ENCODE measurements at regions of chr2 and their contacts with region 1.

Region 1: GRCh38 chr2:135709992-135710391 is 31.7 kb upstream of the UBXN4 start:
- DNase-seq: peak; percentile 49 to 87 (median 70)
- ATAC-seq: peak; percentile 86
- H3K4me3 ChIP-seq: no peak overlapping the region
- H3K4me3 Mint-ChIP-seq: no peak overlapping the region
- H3K27ac ChIP-seq: no peak overlapping the region
- H3K27ac Mint-ChIP-seq: no peak overlapping the region
- H3K4me1 ChIP-seq: no peaks in the 10 kb centered on the region
- H3K4me1 Mint-ChIP-seq: peaks cover 2% of the 10 kb centered on the region
- H3K27me3 ChIP-seq: no peaks in the 10 kb centered on the region
- H3K27me3 Mint-ChIP-seq: no peaks in the 10 kb centered on the region
- CTCF ChIP-seq: peak; percentile 98

Region 2: DNA sequence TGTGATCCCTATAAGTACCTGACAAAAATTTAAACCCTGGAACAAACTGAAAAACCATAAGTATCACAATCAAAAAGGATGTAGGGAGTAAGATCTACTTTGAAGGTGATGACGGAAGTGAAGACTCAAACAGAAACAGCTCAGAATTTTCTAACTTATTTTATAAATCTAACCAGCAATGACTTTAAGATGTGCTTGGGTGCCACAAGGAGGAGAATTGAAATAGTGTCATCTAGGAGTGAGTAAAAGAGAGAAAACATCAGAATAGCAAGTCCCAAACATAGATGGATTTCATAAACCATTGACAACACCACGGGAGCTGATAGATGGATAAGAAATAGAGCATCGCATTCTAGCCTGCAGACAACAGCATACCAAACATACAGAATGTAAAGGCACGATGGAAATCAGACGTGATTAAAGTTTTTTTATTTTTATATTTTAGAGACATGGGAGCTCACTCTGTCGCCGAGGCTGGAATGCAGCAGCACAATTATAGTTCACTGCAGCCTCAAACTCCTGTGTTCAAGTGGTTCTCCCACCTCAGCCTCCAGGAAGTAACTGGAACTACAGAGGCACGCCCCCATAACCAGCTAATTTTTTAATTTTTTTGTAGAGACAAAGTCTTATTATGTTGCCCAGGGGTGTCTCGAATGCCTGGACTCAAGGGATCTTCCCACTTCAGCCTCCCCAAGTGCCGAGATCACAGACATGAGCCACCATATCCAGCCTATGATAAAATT is 699.6 kb before region 1 on chr2:
- CTCF ChIA-PET with region 1: interaction called, 113 read pairs
- POLR2A ChIA-PET with region 1: no interaction called
- intact Hi-C with region 1: no loop called
- DNase-seq: no peak
- ATAC-seq: no peak
- H3K4me3 ChIP-seq: no peak overlapping the region
- H3K4me3 Mint-ChIP-seq: no peak overlapping the region
- H3K27ac ChIP-seq: no peak overlapping the region
- H3K27ac Mint-ChIP-seq: no peak overlapping the region
- H3K4me1 ChIP-seq: no peaks in the 10 kb centered on the region
- H3K4me1 Mint-ChIP-seq: no peaks in the 10 kb centered on the region
- H3K27me3 ChIP-seq: no peaks in the 10 kb centered on the region
- H3K27me3 Mint-ChIP-seq: no peaks in the 10 kb centered on the region
- CTCF ChIP-seq: no peak

Region 3: DNA sequence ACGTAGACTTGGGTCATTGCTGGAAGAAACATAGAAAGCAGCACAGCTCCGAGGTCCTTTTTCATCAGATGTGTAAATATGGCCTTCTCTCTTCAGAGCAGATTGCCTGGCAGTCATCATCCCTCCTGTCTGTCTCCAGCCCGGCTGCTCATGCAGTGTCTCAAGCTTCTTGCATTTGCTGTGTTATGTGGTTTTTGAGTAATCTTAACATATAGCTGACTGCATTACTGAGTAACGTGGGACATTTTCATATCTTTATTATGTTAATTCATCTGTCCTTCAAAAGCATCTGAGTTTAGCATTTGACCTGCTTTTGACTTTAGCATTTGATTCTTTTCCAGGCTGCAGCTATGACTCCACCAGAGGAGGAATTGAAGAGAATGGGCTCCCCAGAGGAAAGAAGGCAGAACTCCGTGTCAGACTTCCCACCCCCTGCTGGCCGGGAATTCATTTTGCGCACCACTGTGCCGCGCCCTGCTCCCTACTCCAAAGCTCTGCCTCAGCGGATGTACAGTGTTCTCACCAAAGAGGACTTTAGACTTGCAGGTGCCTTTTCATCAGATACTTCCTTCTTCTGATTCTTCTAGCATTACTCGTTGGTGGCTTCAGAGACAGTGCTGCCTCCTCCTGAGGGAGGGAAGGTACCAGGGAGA is 541.7 kb before region 1 on chr2:
- CTCF ChIA-PET with region 1: interaction called, 3 read pairs
- POLR2A ChIA-PET with region 1: no interaction called
- intact Hi-C with region 1: loop called in 1 of 2 experiments (anchors 5 kb)
- DNase-seq: no peak
- ATAC-seq: no peak
- H3K4me3 ChIP-seq: no peak overlapping the region
- H3K4me3 Mint-ChIP-seq: no peak overlapping the region
- H3K27ac ChIP-seq: no peak overlapping the region
- H3K27ac Mint-ChIP-seq: peak overlapping the region; percentile 21
- H3K4me1 ChIP-seq: no peaks in the 10 kb centered on the region
- H3K4me1 Mint-ChIP-seq: peaks cover 24% of the 10 kb centered on the region
- H3K27me3 ChIP-seq: no peaks in the 10 kb centered on the region
- H3K27me3 Mint-ChIP-seq: no peaks in the 10 kb centered on the region
- CTCF ChIP-seq: no peak

Region 4: GRCh38 chr2:135531231-135532228 is 178.5 kb before region 1 on chr2 and contains the start of gene R3HDM1:
- CTCF ChIA-PET with region 1: interaction called, 4 read pairs
- POLR2A ChIA-PET with region 1: no interaction called
- intact Hi-C with region 1: loop called in 1 of 2 experiments (anchors 1 kb)
- DNase-seq: peak; percentile 88 to 99 (median 94)
- ATAC-seq: peak; percentile 75
- H3K4me3 ChIP-seq: peak within 1 kb of the TSS; percentile 74 to 84
- H3K4me3 Mint-ChIP-seq: no peak within 1 kb of the TSS
- H3K27ac ChIP-seq: peak within 1 kb of the TSS; percentile 79 to 91
- H3K27ac Mint-ChIP-seq: no peak within 1 kb of the TSS
- H3K4me1 ChIP-seq: peaks cover 15% of the 10 kb centered on the region
- H3K4me1 Mint-ChIP-seq: peaks cover 29% of the 10 kb centered on the region
- H3K27me3 ChIP-seq: no peaks in the 10 kb centered on the region
- H3K27me3 Mint-ChIP-seq: no peaks in the 10 kb centered on the region
- CTCF ChIP-seq: no peak
- total RNA-seq, gene R3HDM1: 35.3 to 48.2 TPM

Region 5: GRCh38 chr2:135600915-135601314 is 109.1 kb before region 1 on chr2:
- CTCF ChIA-PET with region 1: interaction called, 12 read pairs
- POLR2A ChIA-PET with region 1: no interaction called
- intact Hi-C with region 1: loop called in 1 of 2 experiments (anchors 2 kb)
- DNase-seq: peak in 2 of 9 experiments; percentile 18 to 37
- ATAC-seq: no peak
- H3K4me3 ChIP-seq: no peak overlapping the region
- H3K4me3 Mint-ChIP-seq: no peak overlapping the region
- H3K27ac ChIP-seq: no peak overlapping the region
- H3K27ac Mint-ChIP-seq: no peak overlapping the region
- H3K4me1 ChIP-seq: no peaks in the 10 kb centered on the region
- H3K4me1 Mint-ChIP-seq: peaks cover 11% of the 10 kb centered on the region
- H3K27me3 ChIP-seq: no peaks in the 10 kb centered on the region
- H3K27me3 Mint-ChIP-seq: no peaks in the 10 kb centered on the region
- CTCF ChIP-seq: peak; percentile 46

Region 6: GRCh38 chr2:135630488-135630887 is 79.5 kb before region 1 on chr2:
- CTCF ChIA-PET with region 1: no interaction called
- POLR2A ChIA-PET with region 1: no interaction called
- intact Hi-C with region 1: no loop called
- DNase-seq: no peak
- ATAC-seq: no peak
- H3K4me3 ChIP-seq: no peak overlapping the region
- H3K4me3 Mint-ChIP-seq: no peak overlapping the region
- H3K27ac ChIP-seq: no peak overlapping the region
- H3K27ac Mint-ChIP-seq: no peak overlapping the region
- H3K4me1 ChIP-seq: no peaks in the 10 kb centered on the region
- H3K4me1 Mint-ChIP-seq: no peaks in the 10 kb centered on the region
- H3K27me3 ChIP-seq: no peaks in the 10 kb centered on the region
- H3K27me3 Mint-ChIP-seq: no peaks in the 10 kb centered on the region
- CTCF ChIP-seq: no peak